CD4-positive, alpha-beta T cell (primary cell): ENCODE measurements at regions of chr1 and their contacts with region 1.

Region 1: DNA sequence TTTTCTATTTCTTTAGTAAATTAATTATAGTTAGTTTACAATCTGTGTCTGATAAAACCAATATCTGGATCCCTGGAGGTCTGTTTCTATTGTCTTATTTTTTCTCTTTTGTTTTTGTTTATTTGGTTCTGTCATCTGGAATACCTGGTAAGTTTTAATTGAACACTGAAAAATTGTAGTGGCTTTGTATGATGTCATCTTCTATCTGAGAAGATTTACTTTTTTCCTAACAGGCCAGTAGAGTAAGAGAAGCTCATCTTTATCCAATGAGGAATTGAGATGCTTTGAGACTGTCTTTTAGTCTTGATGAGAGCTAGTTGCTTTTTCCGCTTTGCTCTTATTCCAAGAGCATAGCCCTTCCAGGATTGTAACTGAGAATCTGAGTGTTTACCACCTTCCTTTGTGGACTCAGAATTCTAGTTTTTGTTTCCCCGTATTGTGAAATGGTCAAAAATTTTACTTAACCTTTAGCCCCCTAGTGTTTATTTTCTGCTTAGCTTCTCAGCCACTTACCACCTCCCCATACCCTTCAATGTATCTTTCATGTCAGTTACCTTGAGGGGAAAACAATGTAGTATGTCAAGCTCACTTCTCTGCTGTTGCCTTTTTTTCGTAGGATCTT is 25.0 kb downstream of the PTGFRN start:
- DNase-seq: peak in 3 of 14 experiments; percentile 51 to 59 (median 58)
- ATAC-seq: no peak
- H3K4me3 ChIP-seq: no peak overlapping the region
- H3K4me3 Mint-ChIP-seq: no peak overlapping the region
- H3K27ac ChIP-seq: no peak overlapping the region
- H3K27ac Mint-ChIP-seq: peak overlapping the region; percentile 76
- H3K4me1 ChIP-seq: peaks cover 7% of the 10 kb centered on the region
- H3K4me1 Mint-ChIP-seq: peaks cover 25% of the 10 kb centered on the region
- H3K27me3 ChIP-seq: no peaks in the 10 kb centered on the region
- H3K27me3 Mint-ChIP-seq: no peaks in the 10 kb centered on the region
- CTCF ChIP-seq: peak; percentile 33

Region 2: GRCh38 chr1:116763787-116764465 is 170.8 kb before region 1 on chr1:
- CTCF ChIA-PET with region 1: no interaction called
- POLR2A ChIA-PET with region 1: no interaction called
- intact Hi-C with region 1: loop called in 1 of 2 experiments (anchors 10 kb)
- DNase-seq: peak in 6 of 14 experiments; percentile 20 to 74 (median 52)
- ATAC-seq: peak; percentile 18
- H3K4me3 ChIP-seq: peak overlapping the region; percentile 31
- H3K4me3 Mint-ChIP-seq: peak overlapping the region; percentile 83
- H3K27ac ChIP-seq: peak overlapping the region; percentile 88 to 89
- H3K27ac Mint-ChIP-seq: peak overlapping the region; percentile 99
- H3K4me1 ChIP-seq: peaks cover 96% of the 10 kb centered on the region
- H3K4me1 Mint-ChIP-seq: peaks cover 97% of the 10 kb centered on the region
- H3K27me3 ChIP-seq: no peaks in the 10 kb centered on the region
- H3K27me3 Mint-ChIP-seq: no peaks in the 10 kb centered on the region
- CTCF ChIP-seq: peak; percentile 52

Region 3: DNA sequence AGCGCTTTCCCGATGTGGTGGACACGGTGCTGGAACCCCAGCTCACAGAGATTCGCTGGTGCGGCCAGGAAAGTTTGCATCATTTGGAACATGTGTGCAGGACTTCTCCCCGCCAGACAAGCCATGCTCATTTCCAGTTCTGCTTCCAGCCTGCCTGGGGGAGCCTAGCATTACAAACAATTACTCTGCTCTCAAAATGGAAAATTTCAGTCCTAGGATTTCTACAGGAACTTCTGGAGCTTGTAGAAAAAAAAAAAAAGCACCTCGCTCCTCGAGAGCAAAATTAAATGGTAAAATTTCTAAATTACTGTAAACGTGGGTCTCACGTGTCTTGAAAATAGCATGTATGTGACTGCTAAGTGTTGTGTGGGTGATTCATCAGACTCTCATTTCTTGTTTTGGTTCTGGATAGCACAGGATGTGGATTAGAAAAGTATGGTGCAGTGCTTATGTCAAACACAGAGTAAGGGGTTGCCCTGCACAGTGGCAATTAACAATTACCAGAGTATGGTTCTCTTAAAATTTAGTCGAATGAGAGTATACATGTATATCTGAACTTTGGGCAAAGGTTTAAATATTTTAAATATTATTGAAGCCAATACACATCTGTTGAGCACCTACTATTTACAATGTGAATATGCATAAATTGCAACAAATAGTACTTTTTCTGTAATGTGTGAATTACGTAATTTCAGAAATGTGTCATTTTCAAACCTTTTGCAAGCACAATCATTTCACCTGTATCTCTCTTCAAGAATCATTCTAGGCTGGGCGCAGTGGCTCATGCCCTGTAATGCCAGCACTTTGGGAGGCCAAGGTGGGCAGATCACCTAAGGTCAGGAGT is 86.8 kb before region 1 on chr1:
- CTCF ChIA-PET with region 1: no interaction called
- POLR2A ChIA-PET with region 1: no interaction called
- intact Hi-C with region 1: no loop called
- DNase-seq: peak in 4 of 14 experiments; percentile 10 to 29 (median 21)
- ATAC-seq: peak; percentile 74
- H3K4me3 ChIP-seq: no peak overlapping the region
- H3K4me3 Mint-ChIP-seq: no peak overlapping the region
- H3K27ac ChIP-seq: no peak overlapping the region
- H3K27ac Mint-ChIP-seq: no peak overlapping the region
- H3K4me1 ChIP-seq: peaks cover 4% of the 10 kb centered on the region
- H3K4me1 Mint-ChIP-seq: peaks cover 4% of the 10 kb centered on the region
- H3K27me3 ChIP-seq: no peaks in the 10 kb centered on the region
- H3K27me3 Mint-ChIP-seq: no peaks in the 10 kb centered on the region
- CTCF ChIP-seq: no peak

Region 4: DNA sequence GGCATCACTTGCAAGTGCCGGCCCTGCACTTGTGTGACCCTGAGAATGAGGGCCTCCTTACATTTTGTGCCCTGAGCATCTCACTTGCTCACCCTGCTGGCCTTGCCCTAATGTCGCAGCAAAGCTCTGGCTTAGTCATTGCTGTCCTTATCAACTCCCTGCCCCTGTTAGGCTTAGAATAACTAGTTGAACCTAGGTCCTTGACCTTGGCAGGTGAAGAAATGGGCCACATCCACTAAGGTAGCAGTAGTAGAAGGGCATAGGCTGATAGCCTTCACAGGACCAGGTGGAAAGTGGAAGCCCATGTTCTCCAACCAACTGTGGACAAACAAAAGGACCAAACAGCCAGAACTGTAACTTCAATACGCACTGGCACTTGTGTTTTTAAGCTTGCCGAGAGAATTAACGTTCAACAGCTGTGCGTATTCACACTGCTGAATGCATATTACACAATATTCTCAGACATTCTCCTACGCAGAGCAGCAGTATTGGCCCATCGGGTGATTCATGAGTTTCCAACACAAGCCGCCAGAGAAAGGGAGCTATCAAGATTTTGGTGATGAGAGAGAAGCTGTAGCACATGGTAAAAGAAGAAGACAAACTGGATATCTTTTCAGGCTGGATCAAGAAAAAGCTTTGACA is 52.7 kb before region 1 on chr1:
- CTCF ChIA-PET with region 1: interaction called, 4 read pairs
- POLR2A ChIA-PET with region 1: interaction called, 4 read pairs
- intact Hi-C with region 1: loop called in 1 of 2 experiments (anchors 10 kb)
- DNase-seq: peak in 6 of 14 experiments; percentile 9 to 55 (median 31)
- ATAC-seq: no peak
- H3K4me3 ChIP-seq: no peak overlapping the region
- H3K4me3 Mint-ChIP-seq: no peak overlapping the region
- H3K27ac ChIP-seq: no peak overlapping the region
- H3K27ac Mint-ChIP-seq: no peak overlapping the region
- H3K4me1 ChIP-seq: peaks cover 23% of the 10 kb centered on the region
- H3K4me1 Mint-ChIP-seq: peaks cover 3% of the 10 kb centered on the region
- H3K27me3 ChIP-seq: no peaks in the 10 kb centered on the region
- H3K27me3 Mint-ChIP-seq: no peaks in the 10 kb centered on the region
- CTCF ChIP-seq: peak; percentile 31

Region 5: GRCh38 chr1:117009132-117009531 is 74.4 kb after region 1 on chr1:
- CTCF ChIA-PET with region 1: no interaction called
- POLR2A ChIA-PET with region 1: interaction called, 3 read pairs
- intact Hi-C with region 1: loop called in 1 of 2 experiments (anchors 2 kb)
- DNase-seq: peak in 3 of 14 experiments; percentile 43 to 59 (median 45)
- ATAC-seq: peak; percentile 54
- H3K4me3 ChIP-seq: no peak overlapping the region
- H3K4me3 Mint-ChIP-seq: peak overlapping the region; percentile 62
- H3K27ac ChIP-seq: no peak overlapping the region
- H3K27ac Mint-ChIP-seq: peak overlapping the region; percentile 93
- H3K4me1 ChIP-seq: peaks cover 38% of the 10 kb centered on the region
- H3K4me1 Mint-ChIP-seq: peaks cover 74% of the 10 kb centered on the region
- H3K27me3 ChIP-seq: no peaks in the 10 kb centered on the region
- H3K27me3 Mint-ChIP-seq: no peaks in the 10 kb centered on the region
- CTCF ChIP-seq: no peak

Region 6: GRCh38 chr1:117051224-117052064 is 116.7 kb after region 1 on chr1:
- CTCF ChIA-PET with region 1: no interaction called
- POLR2A ChIA-PET with region 1: no interaction called
- intact Hi-C with region 1: loop called in 1 of 2 experiments (anchors 5 kb)
- DNase-seq: peak in 8 of 14 experiments; percentile 13 to 55 (median 39)
- ATAC-seq: no peak
- H3K4me3 ChIP-seq: peak overlapping the region; percentile 35
- H3K4me3 Mint-ChIP-seq: peak overlapping the region; percentile 46
- H3K27ac ChIP-seq: peak overlapping the region in 1 of 2 donors; percentile 27
- H3K27ac Mint-ChIP-seq: peak overlapping the region; percentile 93
- H3K4me1 ChIP-seq: peaks cover 33% of the 10 kb centered on the region
- H3K4me1 Mint-ChIP-seq: peaks cover 63% of the 10 kb centered on the region
- H3K27me3 ChIP-seq: no peaks in the 10 kb centered on the region
- H3K27me3 Mint-ChIP-seq: no peaks in the 10 kb centered on the region
- CTCF ChIP-seq: no peak